OCI-LY7 (cell line): ENCODE measurements at regions of chr2 and their contacts with region 1.

Region 1: DNA sequence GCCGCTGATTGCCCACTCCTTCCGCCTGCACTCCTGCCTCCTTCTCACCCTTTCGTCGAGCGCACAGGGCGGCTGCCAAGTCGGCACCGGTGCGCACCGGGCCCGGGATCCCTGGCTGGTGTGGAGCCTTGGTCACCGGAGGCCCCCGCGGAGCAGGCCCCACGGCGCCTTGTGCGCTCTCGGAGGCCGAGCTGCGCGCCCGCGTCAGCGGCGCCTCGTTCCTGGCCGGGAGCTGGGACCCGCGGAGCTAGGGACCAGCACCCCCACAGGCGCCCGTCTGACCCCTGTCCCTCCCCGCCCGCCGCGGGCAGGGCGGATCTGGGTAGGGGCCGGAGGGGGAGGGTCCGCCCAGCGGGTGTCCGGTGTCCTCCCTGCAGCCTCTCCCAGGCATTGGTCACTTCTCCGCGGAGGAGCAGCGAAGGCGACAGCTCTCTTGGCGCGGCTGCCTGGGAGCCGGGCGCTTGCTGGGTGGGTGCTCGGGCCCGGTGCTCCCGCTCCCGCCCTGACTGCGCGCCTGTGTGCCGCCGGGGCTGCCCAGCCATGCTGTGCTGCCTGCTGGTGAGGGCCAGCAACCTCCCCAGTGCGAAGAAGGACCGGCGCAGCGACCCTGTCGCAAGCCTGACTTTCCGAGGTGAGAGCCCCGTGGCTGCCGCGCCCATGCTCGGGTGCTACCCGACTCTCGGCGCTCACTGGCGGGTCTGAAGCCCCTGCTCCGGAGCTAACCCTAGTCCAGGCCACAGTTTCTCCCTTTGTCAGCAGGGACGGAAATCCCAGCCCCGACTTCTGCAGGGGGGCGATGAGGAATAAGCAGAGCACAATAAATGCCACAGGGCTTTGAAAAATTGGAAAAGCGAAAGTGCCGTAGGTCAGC is 13.2 kb downstream of the DYSF start:
- DNase-seq: no peak
- H3K4me3 ChIP-seq: no peak overlapping the region
- H3K27ac ChIP-seq: no peak overlapping the region
- H3K4me1 ChIP-seq: no peaks in the 10 kb centered on the region
- CTCF ChIP-seq: no peak

Region 2: DNA sequence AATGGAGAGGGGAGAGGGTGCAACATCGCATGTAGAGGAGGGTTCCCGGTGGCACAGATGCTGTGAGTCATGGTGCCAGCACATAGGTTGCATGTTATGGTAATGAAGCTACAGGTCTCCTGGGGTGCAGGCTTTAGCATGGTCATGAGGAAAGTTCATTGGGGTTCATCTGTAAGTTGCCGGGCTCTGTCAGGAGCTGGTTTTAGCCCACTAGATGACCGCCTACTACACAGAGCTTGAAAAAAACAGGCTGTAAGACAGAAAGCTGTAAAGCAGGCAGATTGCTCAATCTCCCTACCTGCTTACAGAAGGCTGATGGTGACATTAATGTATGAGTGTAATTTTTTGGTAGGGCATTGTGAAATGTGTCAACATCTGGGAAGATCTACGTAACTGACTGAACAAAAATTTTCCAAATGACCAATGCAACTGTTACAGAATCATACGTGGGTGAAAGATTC is 10.7 kb after region 1 on chr2:
- CTCF ChIA-PET with region 1: no interaction called
- POLR2A ChIA-PET with region 1: no interaction called
- intact Hi-C with region 1: no loop called
- DNase-seq: no peak
- H3K4me3 ChIP-seq: no peak overlapping the region
- H3K27ac ChIP-seq: no peak overlapping the region
- H3K4me1 ChIP-seq: no peaks in the 10 kb centered on the region
- CTCF ChIP-seq: no peak

Region 3: GRCh38 chr2:71944806-71945602 is 478.5 kb after region 1 on chr2:
- CTCF ChIA-PET with region 1: interaction called, 10 read pairs
- POLR2A ChIA-PET with region 1: no interaction called
- intact Hi-C with region 1: no loop called
- DNase-seq: no peak
- H3K4me3 ChIP-seq: no peak overlapping the region
- H3K27ac ChIP-seq: no peak overlapping the region
- H3K4me1 ChIP-seq: no peaks in the 10 kb centered on the region
- CTCF ChIP-seq: no peak